ENCODE measurements at regions of chr2 and their contacts with region 1.

Region 1: GRCh38 chr2:6773007-6773693 is 92.6 kb downstream of the CMPK2 start:
- DNase-seq: peak; percentile 41 to 85 (median 55)
- ATAC-seq: peak; percentile 43 to 95 (median 86)
- H3K4me3 ChIP-seq: peak overlapping the region in 8 of 12 donors; percentile 15 to 40 (median 21)
- H3K27ac ChIP-seq: no peak overlapping the region
- H3K4me1 ChIP-seq: peaks cover 0 to 12% (median 4%) of the 10 kb centered on the region in 12 donors
- H3K27me3 ChIP-seq: peaks cover 0 to 26% (median 3%) of the 10 kb centered on the region in 9 donors
- CTCF ChIP-seq: peak; percentile 94 to 99 (median 97)
- POLR2A ChIP-seq: no peak

Region 2: GRCh38 chr2:4992226-4992625 is 1780.9 kb before region 1 on chr2:
- intact Hi-C with region 1: loop called in 1 of 10 experiments (anchors 10 kb)
- DNase-seq: no peak
- ATAC-seq: peak in 2 of 4 donors; percentile 45 to 66
- H3K4me3 ChIP-seq: no peak overlapping the region
- H3K27ac ChIP-seq: no peak overlapping the region
- H3K4me1 ChIP-seq: no peaks in the 10 kb centered on the region
- H3K27me3 ChIP-seq: peaks cover 0 to 4% (median 0%) of the 10 kb centered on the region in 9 donors
- CTCF ChIP-seq: peak in 9 of 12 donors; percentile 8 to 55 (median 29)
- POLR2A ChIP-seq: no peak

Region 3: DNA sequence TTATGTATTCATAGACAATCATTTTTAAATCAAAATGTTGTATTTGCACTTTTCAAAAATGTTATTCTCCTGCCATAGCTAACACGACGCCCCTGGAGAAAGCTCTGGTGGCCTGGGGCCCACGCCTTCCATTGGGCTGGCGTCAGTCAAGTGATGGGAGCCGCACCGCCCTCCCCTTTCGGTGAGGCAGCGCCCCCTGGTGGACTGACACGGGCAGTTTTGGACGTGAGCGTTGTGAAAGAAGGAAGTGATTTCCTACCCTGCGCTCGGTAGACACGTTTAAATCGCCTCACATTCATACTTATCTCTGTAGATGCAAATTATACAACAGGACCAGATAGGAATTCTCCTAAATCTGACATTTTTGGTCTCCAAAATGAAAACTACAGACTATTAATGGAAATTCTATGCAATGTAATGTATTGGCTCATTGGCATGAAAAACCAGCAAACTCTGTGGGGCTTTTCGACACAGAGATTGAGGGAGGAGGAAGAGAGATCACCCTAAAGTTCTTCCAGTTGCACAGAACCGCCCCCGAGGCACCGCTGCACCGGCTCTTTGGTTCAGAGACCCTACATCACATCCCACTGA is 1407.2 kb before region 1 on chr2:
- intact Hi-C with region 1: loop called in 1 of 10 experiments (anchors 10 kb)
- DNase-seq: peak; percentile 40 to 70 (median 50)
- ATAC-seq: peak in 3 of 4 donors; percentile 70 to 84 (median 79)
- H3K4me3 ChIP-seq: no peak overlapping the region
- H3K27ac ChIP-seq: no peak overlapping the region
- H3K4me1 ChIP-seq: peaks cover 0 to 4% (median 0%) of the 10 kb centered on the region in 12 donors
- H3K27me3 ChIP-seq: no peaks in the 10 kb centered on the region
- CTCF ChIP-seq: peak; percentile 61 to 87 (median 74)
- POLR2A ChIP-seq: no peak

Region 4: DNA sequence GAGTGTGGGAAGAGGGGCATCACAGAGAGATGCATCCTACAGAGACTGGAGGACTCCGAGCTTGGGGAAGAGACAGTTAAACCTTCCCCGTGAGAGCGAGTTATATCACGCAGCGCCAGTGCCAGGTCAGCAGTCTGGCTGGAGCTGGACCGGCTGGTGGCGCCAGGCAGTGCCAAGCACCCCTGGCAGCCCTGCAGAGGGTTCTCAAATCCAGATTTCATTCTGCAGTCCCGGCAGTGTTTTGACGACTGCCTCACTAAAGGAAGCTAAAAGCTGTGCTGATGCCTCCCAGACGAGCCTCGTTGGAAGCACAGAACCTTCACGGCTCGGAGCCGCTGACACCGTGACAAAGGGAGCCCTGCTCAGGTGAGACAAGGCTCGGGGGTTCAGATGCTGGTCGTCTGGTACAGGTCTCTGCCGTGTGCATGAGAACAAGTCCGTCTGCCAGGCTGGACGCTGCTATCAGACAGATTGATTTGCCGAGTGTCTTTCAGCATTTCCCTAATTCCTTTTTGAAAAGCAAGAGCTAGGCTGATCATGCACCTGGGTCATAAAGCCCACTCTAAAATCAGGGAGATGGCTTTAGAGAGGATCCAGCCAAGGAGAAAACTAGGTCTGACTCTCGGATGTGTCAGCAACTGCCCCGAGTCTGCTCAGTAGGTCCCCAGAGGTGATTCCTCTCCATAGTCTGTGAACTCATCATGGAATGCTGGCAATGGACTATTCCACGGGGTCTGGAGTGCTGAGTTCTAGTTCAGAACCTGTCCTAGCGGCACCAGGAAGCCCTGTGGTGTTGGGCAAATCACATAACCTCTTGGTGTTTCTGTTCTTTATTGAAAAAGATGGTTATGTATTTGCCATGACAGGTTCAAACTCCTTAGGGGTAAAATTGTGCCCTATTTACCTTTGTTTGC is 840.3 kb before region 1 on chr2:
- intact Hi-C with region 1: loop called in 1 of 10 experiments (anchors 10 kb)
- DNase-seq: peak in 4 of 5 donors; percentile 51 to 79 (median 60)
- ATAC-seq: peak; percentile 92 to 97 (median 96)
- H3K4me3 ChIP-seq: peak overlapping the region in 10 of 12 donors; percentile 8 to 51 (median 30)
- H3K27ac ChIP-seq: peak overlapping the region in 1 of 12 donors; percentile 11
- H3K4me1 ChIP-seq: peaks cover 0 to under 1% (median 0%) of the 10 kb centered on the region in 12 donors
- H3K27me3 ChIP-seq: no peaks in the 10 kb centered on the region
- CTCF ChIP-seq: peak in 5 of 12 donors; percentile 9 to 37 (median 31)
- POLR2A ChIP-seq: no peak

Region 5: GRCh38 chr2:6352906-6353515 is 420.1 kb before region 1 on chr2:
- intact Hi-C with region 1: loop called in 9 of 10 experiments (anchors 1 to 2 kb)
- DNase-seq: peak; percentile 18 to 69 (median 47)
- ATAC-seq: peak in 3 of 4 donors; percentile 36 to 61 (median 53)
- H3K4me3 ChIP-seq: no peak overlapping the region
- H3K27ac ChIP-seq: no peak overlapping the region
- H3K4me1 ChIP-seq: no peaks in the 10 kb centered on the region
- H3K27me3 ChIP-seq: no peaks in the 10 kb centered on the region
- CTCF ChIP-seq: peak; percentile 40 to 75 (median 62)
- POLR2A ChIP-seq: no peak